ENCODE measurements at regions of chr12 and their contacts with region 1.

Region 1: GRCh38 chr12:116880817-116881324 is 370 bp downstream of the HRK start:
- DNase-seq: peak; percentile 57
- H3K4me3 ChIP-seq: peak overlapping the region; percentile 18 to 45
- H3K27ac ChIP-seq: no peak overlapping the region
- H3K4me1 ChIP-seq: peaks cover 17% of the 10 kb centered on the region
- H3K27me3 ChIP-seq: no peaks in the 10 kb centered on the region
- CTCF ChIP-seq: no peak
- POLR2A ChIP-seq: no peak

Region 2: DNA sequence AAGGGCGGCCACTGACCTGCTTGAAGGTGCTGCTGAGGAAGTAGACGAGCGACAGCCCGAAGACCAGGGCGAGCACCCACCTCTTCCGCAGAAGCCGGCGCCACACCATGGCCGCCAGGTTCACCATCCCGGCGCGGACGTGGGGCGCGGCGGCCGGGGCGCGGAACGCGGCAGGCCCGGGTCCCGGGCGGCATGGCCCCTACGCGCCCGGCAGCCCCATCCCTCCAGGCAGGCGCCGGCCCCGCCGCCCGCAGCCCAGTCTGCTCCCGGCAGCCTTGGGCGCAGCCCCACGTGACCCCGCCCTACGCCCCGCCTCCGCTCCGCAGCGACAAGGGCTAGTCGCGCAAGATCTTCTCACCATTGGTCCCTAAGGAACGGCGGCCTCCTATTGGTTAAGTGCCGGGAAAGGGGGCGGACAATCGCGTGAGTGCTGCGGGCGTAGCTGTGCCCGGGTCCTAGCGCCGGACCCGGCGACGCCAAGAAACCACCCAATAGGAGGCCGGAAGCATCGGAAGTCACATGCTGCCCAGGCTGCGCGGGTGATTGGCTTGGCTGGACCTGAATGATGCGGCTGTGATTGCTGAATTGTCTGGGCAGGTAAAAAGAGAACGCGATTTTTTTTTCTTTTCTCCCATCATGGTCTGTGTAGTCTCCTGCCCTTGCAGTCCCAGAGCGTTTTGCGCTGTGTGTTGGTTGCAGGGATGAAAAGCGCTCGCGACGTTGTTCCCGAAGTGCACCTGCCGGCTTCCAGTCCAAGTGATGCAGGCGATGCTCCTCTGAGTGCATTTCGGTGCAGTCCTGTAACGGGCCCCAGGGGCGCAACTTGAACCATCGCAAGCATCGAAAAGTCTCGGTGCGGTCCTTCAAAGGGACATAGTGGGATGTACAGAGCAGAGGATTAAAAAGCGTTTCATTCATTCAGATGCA is 142.8 kb before region 1 on chr12 and contains the starts of genes RNFT2 and SPRING1:
- intact Hi-C with region 1: loop called (anchors 10 kb)
- DNase-seq: peak; percentile 100
- H3K4me3 ChIP-seq: peak within 1 kb of the TSS; percentile 85 to 87
- H3K27ac ChIP-seq: peak within 1 kb of the TSS in 1 of 2 donors; percentile 45
- H3K4me1 ChIP-seq: peaks cover 6% of the 10 kb centered on the region
- H3K27me3 ChIP-seq: no peaks in the 10 kb centered on the region
- CTCF ChIP-seq: no peak
- POLR2A ChIP-seq: peak; percentile 49
- total RNA-seq, gene RNFT2: 6.8 to 9.0 TPM
- total RNA-seq, gene SPRING1: 23.4 to 25.5 TPM

Region 3: DNA sequence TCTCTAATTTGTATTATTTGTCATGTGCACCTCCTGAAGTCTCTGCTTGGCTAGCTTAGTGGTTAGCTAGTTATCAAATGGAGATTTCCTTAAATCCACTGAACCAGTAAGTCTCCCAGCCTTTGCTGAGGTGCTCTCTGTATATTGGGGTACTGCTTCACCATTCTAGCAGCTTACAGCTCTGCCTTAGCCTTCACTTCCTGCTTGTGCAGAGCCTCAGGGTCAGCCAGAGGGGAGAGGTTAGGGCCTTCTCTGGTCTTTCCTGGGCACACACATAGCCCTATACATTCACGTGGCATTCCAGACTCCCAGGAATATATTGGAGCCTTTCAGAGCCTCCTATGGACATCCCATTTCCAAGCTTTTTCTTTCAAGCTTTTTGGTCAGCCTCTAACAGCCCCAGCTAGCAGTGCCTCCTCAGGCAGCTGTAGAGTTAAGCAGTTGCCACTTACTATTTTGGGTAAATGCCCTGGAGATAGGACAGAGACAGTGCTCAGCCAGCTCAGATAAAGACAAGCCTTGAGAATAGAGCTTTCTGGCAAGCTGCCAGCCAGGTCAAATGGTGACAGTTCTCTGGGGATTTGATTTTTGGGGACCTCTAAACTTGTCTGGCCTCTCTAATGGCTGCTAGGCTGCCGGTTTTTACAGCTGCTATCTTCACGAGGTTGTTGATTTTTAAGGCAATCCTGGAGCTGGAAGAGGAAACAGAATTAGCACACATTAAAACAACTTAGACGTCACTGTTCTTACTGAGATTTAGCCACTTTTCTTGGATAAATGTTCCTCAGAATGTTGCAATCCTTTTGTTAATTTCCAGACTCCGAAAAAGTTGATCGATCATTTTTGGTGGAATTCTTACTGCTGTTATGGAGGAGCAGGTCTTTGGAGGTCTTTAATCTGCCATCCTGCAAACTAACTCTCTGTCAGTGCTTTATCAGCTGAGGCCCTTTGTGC is 62.8 kb after region 1 on chr12:
- intact Hi-C with region 1: no loop called
- DNase-seq: peak; percentile 34
- H3K4me3 ChIP-seq: no peak overlapping the region
- H3K27ac ChIP-seq: no peak overlapping the region
- H3K4me1 ChIP-seq: no peaks in the 10 kb centered on the region
- H3K27me3 ChIP-seq: no peaks in the 10 kb centered on the region
- CTCF ChIP-seq: no peak
- POLR2A ChIP-seq: no peak

Measured in testis (tissue), 5 donors.